Caco-2 (cell line): ENCODE measurements at regions of chrX and their contacts with region 1.

Region 1: DNA sequence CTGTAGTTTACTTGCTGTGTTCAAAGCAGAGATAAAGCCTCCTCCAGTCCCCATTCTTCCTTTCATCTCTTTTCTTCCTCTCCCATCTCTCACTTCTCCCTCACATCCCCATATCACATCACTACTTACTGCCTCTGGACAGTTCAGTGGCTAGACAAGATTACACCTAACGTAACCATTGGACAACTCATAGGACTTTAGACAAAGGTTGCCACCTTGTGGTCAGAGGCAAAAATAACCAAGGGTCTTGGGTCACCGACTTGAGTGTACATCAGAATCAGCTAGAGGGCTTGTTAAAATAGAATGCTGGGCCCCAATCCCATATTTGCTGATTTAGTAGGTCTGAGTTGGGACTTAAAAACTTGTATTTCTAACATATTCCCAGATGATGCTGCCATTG is 109.3 kb upstream of the DGKK start:
- DNase-seq: peak; percentile 50
- H3K4me3 ChIP-seq: no peak overlapping the region
- H3K4me3 Mint-ChIP-seq: no peak overlapping the region
- H3K27ac Mint-ChIP-seq: no peak overlapping the region
- H3K4me1 ChIP-seq: no peaks in the 10 kb centered on the region
- H3K4me1 Mint-ChIP-seq: peaks cover 6% of the 10 kb centered on the region
- H3K27me3 ChIP-seq: no peaks in the 10 kb centered on the region
- H3K27me3 Mint-ChIP-seq: no peaks in the 10 kb centered on the region
- CTCF ChIP-seq: peak; percentile 36 to 45

Region 2: GRCh38 chrX:50470103-50471031 is 109.6 kb before region 1 on chrX and contains the start of gene DGKK:
- CTCF ChIA-PET with region 1: interaction called, 3 read pairs
- POLR2A ChIA-PET with region 1: no interaction called
- intact Hi-C with region 1: loop called (anchors 1 kb)
- DNase-seq: peak; percentile 68 to 69
- H3K4me3 ChIP-seq: peak within 1 kb of the TSS; percentile 43
- H3K4me3 Mint-ChIP-seq: peak within 1 kb of the TSS; percentile 69
- H3K27ac Mint-ChIP-seq: no peak within 1 kb of the TSS
- H3K4me1 ChIP-seq: no peaks in the 10 kb centered on the region
- H3K4me1 Mint-ChIP-seq: peaks cover 9% of the 10 kb centered on the region
- H3K27me3 ChIP-seq: no peaks in the 10 kb centered on the region
- H3K27me3 Mint-ChIP-seq: peaks cover 16% of the 10 kb centered on the region
- CTCF ChIP-seq: no peak
- total RNA-seq, gene DGKK: 2.5 and 3.7 TPM in 2 replicates

Region 3: GRCh38 chrX:50680990-50681389 is 101.0 kb after region 1 on chrX:
- CTCF ChIA-PET with region 1: no interaction called
- POLR2A ChIA-PET with region 1: no interaction called
- intact Hi-C with region 1: loop called (anchors 2 kb)
- DNase-seq: no peak
- H3K4me3 ChIP-seq: no peak overlapping the region
- H3K4me3 Mint-ChIP-seq: no peak overlapping the region
- H3K27ac Mint-ChIP-seq: no peak overlapping the region
- H3K4me1 ChIP-seq: no peaks in the 10 kb centered on the region
- H3K4me1 Mint-ChIP-seq: no peaks in the 10 kb centered on the region
- H3K27me3 ChIP-seq: no peaks in the 10 kb centered on the region
- H3K27me3 Mint-ChIP-seq: peaks cover under 1% of the 10 kb centered on the region
- CTCF ChIP-seq: peak in 1 of 2 experiments; percentile 32